Heart right ventricle (tissue), 16 donors: ENCODE measurements at regions of chr2 and their contacts with region 1.

Region 1: GRCh38 chr2:64523666-64524603 is at the start of gene AFTPH:
- DNase-seq: peak; percentile 99
- ATAC-seq: peak; percentile 99 to 100 (median 100)
- H3K4me3 ChIP-seq: peak within 1 kb of the TSS; percentile 74 to 98 (median 92)
- H3K27ac ChIP-seq: peak within 1 kb of the TSS; percentile 75 to 98 (median 94)
- H3K4me1 ChIP-seq: peaks cover 0 to 49% (median 34%) of the 10 kb centered on the region in 9 donors
- H3K27me3 ChIP-seq: no peaks in the 10 kb centered on the region
- CTCF ChIP-seq: peak in 1 of 9 donors; percentile 13
- total RNA-seq, gene AFTPH: 9.8 to 12.8 (median 11.0) TPM

Region 2: GRCh38 chr2:64562148-64562784 is 38.3 kb after region 1 on chr2:
- intact Hi-C with region 1: loop called in 8 of 10 experiments (anchors 2 to 5 kb)
- DNase-seq: no peak
- ATAC-seq: peak in 4 of 8 donors; percentile 52 to 58 (median 54)
- H3K4me3 ChIP-seq: no peak overlapping the region
- H3K27ac ChIP-seq: no peak overlapping the region
- H3K4me1 ChIP-seq: peaks cover 0 to 27% (median 7%) of the 10 kb centered on the region in 9 donors
- H3K27me3 ChIP-seq: no peaks in the 10 kb centered on the region
- CTCF ChIP-seq: peak; percentile 20 to 65 (median 41)

Region 3: GRCh38 chr2:64635976-64636911 is 112.3 kb after region 1 on chr2:
- intact Hi-C with region 1: loop called in 3 of 10 experiments (anchors 10 kb)
- DNase-seq: no peak
- ATAC-seq: peak in 4 of 8 donors; percentile 12 to 50 (median 34)
- H3K4me3 ChIP-seq: no peak overlapping the region
- H3K27ac ChIP-seq: peak overlapping the region in 1 of 10 donors; percentile 33
- H3K4me1 ChIP-seq: peaks cover 0 to 68% (median 28%) of the 10 kb centered on the region in 9 donors
- H3K27me3 ChIP-seq: no peaks in the 10 kb centered on the region
- CTCF ChIP-seq: no peak

Region 4: GRCh38 chr2:64653349-64654062 is 129.6 kb after region 1 on chr2 and contains the start of gene SERTAD2:
- intact Hi-C with region 1: loop called in 3 of 10 experiments (anchors 5 to 10 kb)
- DNase-seq: peak; percentile 90 to 92
- ATAC-seq: peak; percentile 89 to 93 (median 92)
- H3K4me3 ChIP-seq: peak within 1 kb of the TSS; percentile 65 to 99 (median 87)
- H3K27ac ChIP-seq: peak within 1 kb of the TSS; percentile 92 to 100 (median 99)
- H3K4me1 ChIP-seq: peaks cover 0 to 75% (median 57%) of the 10 kb centered on the region in 9 donors
- H3K27me3 ChIP-seq: no peaks in the 10 kb centered on the region
- CTCF ChIP-seq: peak in 6 of 9 donors; percentile 4 to 31 (median 24)
- total RNA-seq, gene SERTAD2: 11.3 to 20.9 (median 16.6) TPM

Region 5: DNA sequence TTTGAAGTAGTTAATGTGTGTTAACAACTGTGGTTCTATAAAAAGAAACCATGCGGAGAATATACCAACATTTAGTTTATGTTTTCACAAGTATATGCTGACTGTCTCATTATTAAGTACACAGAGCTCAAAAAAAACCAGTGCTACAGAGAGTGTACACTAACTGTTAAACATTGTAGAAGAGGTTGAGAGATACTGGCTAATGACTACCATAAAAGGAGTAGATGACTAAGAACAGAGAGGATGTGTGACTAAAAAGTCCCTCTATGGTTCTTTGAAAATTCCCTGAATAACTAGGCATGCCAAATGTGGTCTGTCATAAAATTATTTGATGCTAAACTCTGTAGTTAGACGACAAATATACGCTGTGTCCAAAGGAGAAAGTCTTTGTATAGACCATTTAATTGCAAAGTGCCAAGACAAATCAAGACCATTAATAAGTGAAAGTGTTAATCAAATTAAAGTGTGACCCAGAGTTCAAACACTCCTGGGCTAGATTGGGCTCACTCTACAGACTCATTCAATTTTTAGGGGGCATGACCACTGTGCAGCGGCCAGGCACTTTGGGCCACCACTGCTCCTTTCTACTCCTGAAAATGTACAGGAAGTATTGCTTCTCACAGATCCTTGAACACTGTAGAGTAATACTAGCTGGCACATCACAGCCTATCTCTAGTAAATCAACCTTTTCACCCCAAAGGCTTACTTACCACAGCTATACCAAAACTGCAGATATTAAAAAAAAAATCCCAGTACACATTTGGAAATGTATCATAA is 174.9 kb after region 1 on chr2:
- intact Hi-C with region 1: no loop called
- DNase-seq: no peak
- ATAC-seq: no peak
- H3K4me3 ChIP-seq: no peak overlapping the region
- H3K27ac ChIP-seq: peak overlapping the region in 1 of 10 donors; percentile 61
- H3K4me1 ChIP-seq: peaks cover 0 to 42% (median 4%) of the 10 kb centered on the region in 9 donors
- H3K27me3 ChIP-seq: no peaks in the 10 kb centered on the region
- CTCF ChIP-seq: no peak

Region 6: DNA sequence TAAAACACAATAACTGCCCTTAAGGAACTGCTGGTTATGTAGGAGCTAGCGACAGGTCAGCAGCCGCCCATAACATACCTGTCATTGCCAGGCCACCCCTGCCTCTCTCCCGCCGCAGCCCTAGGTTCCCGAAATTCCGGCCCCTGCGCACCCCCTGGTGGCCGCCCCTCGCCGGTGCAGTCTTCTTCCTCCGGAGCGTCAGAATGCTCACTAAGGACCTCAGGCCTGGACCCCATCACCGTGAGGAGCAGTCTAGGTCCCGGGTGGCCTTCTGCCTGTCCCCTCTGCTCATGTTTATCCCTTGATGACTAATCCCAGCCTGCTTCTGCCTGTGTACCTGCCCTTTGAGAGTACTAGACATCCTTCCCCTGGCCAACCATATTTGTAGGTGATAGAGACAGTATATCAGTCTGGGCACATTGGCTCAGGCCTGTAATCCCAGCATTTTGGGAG is 349.6 kb after region 1 on chr2:
- intact Hi-C with region 1: loop called in 8 of 10 experiments (anchors 2 to 5 kb)
- DNase-seq: peak; percentile 75 to 84
- ATAC-seq: peak; percentile 75 to 90 (median 82)
- H3K4me3 ChIP-seq: peak overlapping the region in 7 of 10 donors; percentile 19 to 36 (median 29)
- H3K27ac ChIP-seq: no peak overlapping the region
- H3K4me1 ChIP-seq: peaks cover 0 to 22% (median 15%) of the 10 kb centered on the region in 9 donors
- H3K27me3 ChIP-seq: no peaks in the 10 kb centered on the region
- CTCF ChIP-seq: peak; percentile 96 to 98 (median 97)

Region 7: GRCh38 chr2:65075605-65076344 is 551.8 kb after region 1 on chr2:
- intact Hi-C with region 1: no loop called
- DNase-seq: peak; percentile 52 to 64
- ATAC-seq: peak; percentile 74 to 89 (median 84)
- H3K4me3 ChIP-seq: no peak overlapping the region
- H3K27ac ChIP-seq: peak overlapping the region; percentile 17 to 66 (median 40)
- H3K4me1 ChIP-seq: peaks cover 7 to 65% (median 42%) of the 10 kb centered on the region in 9 donors
- H3K27me3 ChIP-seq: no peaks in the 10 kb centered on the region
- CTCF ChIP-seq: peak in 1 of 9 donors; percentile 7